BJ (cell line): ENCODE measurements at regions of chr12 and their contacts with region 1.

Region 1: GRCh38 chr12:100266835-100267618 is at the starts of genes DEPDC4 and SCYL2:
- DNase-seq: peak; percentile 88
- H3K4me3 ChIP-seq: peak within 1 kb of the TSS; percentile 49
- H3K27me3 ChIP-seq: no peaks in the 10 kb centered on the region
- CTCF ChIP-seq: 0 out of 2 replicates have a peak, but pooled peaks have one; percentile 9
- polyA plus RNA-seq, gene DEPDC4: 0.28 and 0.43 TPM in 2 replicates
- polyA plus RNA-seq, gene SCYL2: 12.4 and 31.0 TPM in 2 replicates

Region 2: DNA sequence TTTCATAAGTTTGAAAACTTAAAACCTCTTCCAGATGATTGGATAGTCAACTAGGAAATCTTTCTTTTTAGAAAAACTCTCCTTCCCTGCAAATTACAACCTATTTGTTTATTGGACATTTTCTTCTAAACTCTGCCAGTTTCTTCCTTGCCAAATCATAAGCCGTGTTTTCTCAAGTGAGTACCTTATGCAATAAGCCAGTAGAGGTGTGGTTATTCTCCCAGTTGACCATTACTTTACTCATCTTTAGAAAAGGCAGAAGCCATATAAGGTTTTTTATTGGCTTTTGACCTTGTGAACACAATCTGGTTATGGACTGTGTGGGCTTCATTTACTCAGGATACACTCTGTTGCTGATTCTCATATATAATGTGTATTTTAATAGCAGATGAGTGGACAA is 51.8 kb before region 1 on chr12:
- CTCF ChIA-PET with region 1: no interaction called
- POLR2A ChIA-PET with region 1: no interaction called
- DNase-seq: no peak
- H3K4me3 ChIP-seq: no peak overlapping the region
- H3K27me3 ChIP-seq: no peaks in the 10 kb centered on the region
- CTCF ChIP-seq: no peak

Region 3: GRCh38 chr12:100225491-100225890 is 41.5 kb before region 1 on chr12:
- CTCF ChIA-PET with region 1: no interaction called
- POLR2A ChIA-PET with region 1: no interaction called
- DNase-seq: no peak
- H3K4me3 ChIP-seq: no peak overlapping the region
- H3K27me3 ChIP-seq: no peaks in the 10 kb centered on the region
- CTCF ChIP-seq: no peak

Region 4: GRCh38 chr12:100324498-100324897 is 57.5 kb after region 1 on chr12:
- CTCF ChIA-PET with region 1: no interaction called
- POLR2A ChIA-PET with region 1: interaction called, 11 read pairs
- DNase-seq: no peak
- H3K4me3 ChIP-seq: no peak overlapping the region
- H3K27me3 ChIP-seq: no peaks in the 10 kb centered on the region
- CTCF ChIP-seq: no peak

Region 5: GRCh38 chr12:101117842-101118241 is 850.8 kb after region 1 on chr12:
- CTCF ChIA-PET with region 1: no interaction called
- POLR2A ChIA-PET with region 1: interaction called, 10 read pairs
- DNase-seq: no peak
- H3K4me3 ChIP-seq: no peak overlapping the region
- H3K27me3 ChIP-seq: no peaks in the 10 kb centered on the region
- CTCF ChIP-seq: no peak